ENCODE measurements at regions of chr14 and their contacts with region 1.

Region 1: GRCh38 chr14:103920981-103921854 is 7.0 kb upstream of the TDRD9 start:
- DNase-seq: peak; percentile 92
- ATAC-seq: peak; percentile 95
- H3K4me3 Mint-ChIP-seq: peak overlapping the region; percentile 96
- H3K27ac Mint-ChIP-seq: peak overlapping the region; percentile 80
- H3K4me1 Mint-ChIP-seq: peaks cover 9% of the 10 kb centered on the region
- H3K27me3 Mint-ChIP-seq: no peaks in the 10 kb centered on the region
- CTCF ChIP-seq: peak; percentile 96

Region 2: GRCh38 chr14:103910262-103910935 is 10.8 kb before region 1 on chr14:
- CTCF ChIA-PET with region 1: interaction called, 14 read pairs
- POLR2A ChIA-PET with region 1: no interaction called
- DNase-seq: peak; percentile 88
- ATAC-seq: peak; percentile 96
- H3K4me3 Mint-ChIP-seq: peak overlapping the region; percentile 53
- H3K27ac Mint-ChIP-seq: peak overlapping the region; percentile 5
- H3K4me1 Mint-ChIP-seq: peaks cover 14% of the 10 kb centered on the region
- H3K27me3 Mint-ChIP-seq: no peaks in the 10 kb centered on the region
- CTCF ChIP-seq: peak; percentile 44